ENCODE measurements at regions of chr5 and their contacts with region 1.

Region 1: GRCh38 chr5:15821506-15821905 is 321.5 kb downstream of the FBXL7 start:
- DNase-seq: no peak
- H3K4me3 ChIP-seq: no peak overlapping the region
- H3K27ac ChIP-seq: no peak overlapping the region
- H3K4me1 ChIP-seq: peaks cover 3 to 9% (median 6%) of the 10 kb centered on the region in 4 donors
- H3K27me3 ChIP-seq: no peaks in the 10 kb centered on the region
- CTCF ChIP-seq: no peak
- EP300 ChIP-seq: no peak
- POLR2A ChIP-seq: no peak

Region 2: DNA sequence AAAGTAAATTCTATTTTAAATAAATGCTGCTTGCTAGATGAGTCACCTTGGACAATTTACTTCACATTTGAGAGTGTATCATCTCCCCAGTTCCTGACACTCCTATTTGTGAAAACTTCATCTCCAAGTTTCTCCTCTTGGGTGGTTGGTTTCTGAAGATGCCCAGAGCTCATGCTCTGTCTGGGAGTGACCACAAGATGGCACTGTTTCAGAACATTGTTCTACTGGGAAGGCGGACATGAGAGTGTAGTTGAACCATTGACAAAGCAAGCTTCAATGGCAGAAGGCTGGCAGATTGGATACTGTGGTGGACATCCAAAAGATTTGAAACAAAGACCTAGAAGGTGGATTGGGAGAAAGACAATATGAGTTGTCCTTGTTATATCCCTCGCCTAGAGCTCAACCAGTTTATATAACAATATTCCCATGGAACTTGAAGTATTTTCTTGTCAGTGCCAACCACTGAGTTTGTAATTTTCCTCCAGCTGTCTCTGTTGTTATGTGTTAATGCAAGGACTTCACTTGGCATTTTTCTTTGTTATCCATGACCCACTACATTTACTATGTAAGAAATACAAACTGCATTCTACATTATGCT is 715.6 kb before region 1 on chr5:
- intact Hi-C with region 1: loop called (anchors 10 kb)
- DNase-seq: no peak
- H3K4me3 ChIP-seq: no peak overlapping the region
- H3K27ac ChIP-seq: no peak overlapping the region
- H3K4me1 ChIP-seq: no peaks in the 10 kb centered on the region
- H3K27me3 ChIP-seq: no peaks in the 10 kb centered on the region
- CTCF ChIP-seq: peak; percentile 57 to 78 (median 71)
- EP300 ChIP-seq: no peak
- POLR2A ChIP-seq: no peak

Region 3: DNA sequence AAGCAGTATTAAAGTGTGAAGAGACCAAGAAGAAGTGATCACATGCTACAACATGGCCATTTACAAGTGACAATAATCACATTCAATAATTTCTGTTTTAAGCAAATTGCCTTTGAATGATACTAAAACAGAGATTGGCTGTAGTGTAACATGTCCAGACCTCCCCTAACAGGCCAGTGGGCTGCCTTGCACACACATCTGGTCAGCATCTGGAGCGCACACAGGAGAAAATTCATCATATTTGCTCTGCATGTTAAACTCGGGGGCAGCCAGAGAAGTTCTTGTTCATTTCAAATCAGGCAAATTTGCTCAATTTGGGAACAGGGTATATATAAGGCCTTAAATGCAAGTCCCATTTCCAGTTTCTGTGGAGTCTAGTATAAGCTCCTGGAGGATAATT is 432.6 kb before region 1 on chr5:
- intact Hi-C with region 1: loop called (anchors 5 kb)
- DNase-seq: no peak
- H3K4me3 ChIP-seq: no peak overlapping the region
- H3K27ac ChIP-seq: no peak overlapping the region
- H3K4me1 ChIP-seq: no peaks in the 10 kb centered on the region
- H3K27me3 ChIP-seq: no peaks in the 10 kb centered on the region
- CTCF ChIP-seq: no peak
- EP300 ChIP-seq: no peak
- POLR2A ChIP-seq: no peak

Region 4: GRCh38 chr5:15499528-15500324 is 321.8 kb before region 1 on chr5 and contains the start of gene FBXL7:
- intact Hi-C with region 1: loop called (anchors 5 kb)
- DNase-seq: peak; percentile 74
- H3K4me3 ChIP-seq: peak within 1 kb of the TSS; percentile 72 to 93 (median 86)
- H3K27ac ChIP-seq: peak within 1 kb of the TSS; percentile 86 to 93 (median 90)
- H3K4me1 ChIP-seq: peaks cover 24 to 43% (median 36%) of the 10 kb centered on the region in 4 donors
- H3K27me3 ChIP-seq: no peaks in the 10 kb centered on the region
- CTCF ChIP-seq: peak; percentile 17 to 32 (median 26)
- EP300 ChIP-seq: no peak
- POLR2A ChIP-seq: peak; percentile 20
- total RNA-seq, gene FBXL7: 25.7 to 37.7 (median 27.6) TPM

Measured in esophagus muscularis mucosa (tissue), 4 donors.